Activated CD4-positive, alpha-beta T cell treated with anti-CD3 and anti-CD28 coated beads for 36 hours (primary cell): ENCODE measurements at regions of chr1 and their contacts with region 1.

Region 1: GRCh38 chr1:12501661-12502060 is 116.3 kb downstream of the DHRS3 start:
- DNase-seq: no peak
- ATAC-seq: no peak
- H3K4me3 Mint-ChIP-seq: no peak overlapping the region
- H3K27ac Mint-ChIP-seq: peak overlapping the region; percentile 68
- H3K4me1 Mint-ChIP-seq: peaks cover 45% of the 10 kb centered on the region
- H3K27me3 Mint-ChIP-seq: no peaks in the 10 kb centered on the region

Region 2: GRCh38 chr1:12467570-12468286 is 33.9 kb before region 1 on chr1:
- CTCF ChIA-PET with region 1: no interaction called
- POLR2A ChIA-PET with region 1: interaction called, 10 read pairs
- intact Hi-C with region 1: no loop called
- DNase-seq: no peak
- ATAC-seq: peak; percentile 73
- H3K4me3 Mint-ChIP-seq: no peak overlapping the region
- H3K27ac Mint-ChIP-seq: peak overlapping the region; percentile 89
- H3K4me1 Mint-ChIP-seq: peaks cover 51% of the 10 kb centered on the region
- H3K27me3 Mint-ChIP-seq: no peaks in the 10 kb centered on the region